Panc1 (cell line): ENCODE measurements at regions of chr1 and their contacts with region 1.

Region 1: DNA sequence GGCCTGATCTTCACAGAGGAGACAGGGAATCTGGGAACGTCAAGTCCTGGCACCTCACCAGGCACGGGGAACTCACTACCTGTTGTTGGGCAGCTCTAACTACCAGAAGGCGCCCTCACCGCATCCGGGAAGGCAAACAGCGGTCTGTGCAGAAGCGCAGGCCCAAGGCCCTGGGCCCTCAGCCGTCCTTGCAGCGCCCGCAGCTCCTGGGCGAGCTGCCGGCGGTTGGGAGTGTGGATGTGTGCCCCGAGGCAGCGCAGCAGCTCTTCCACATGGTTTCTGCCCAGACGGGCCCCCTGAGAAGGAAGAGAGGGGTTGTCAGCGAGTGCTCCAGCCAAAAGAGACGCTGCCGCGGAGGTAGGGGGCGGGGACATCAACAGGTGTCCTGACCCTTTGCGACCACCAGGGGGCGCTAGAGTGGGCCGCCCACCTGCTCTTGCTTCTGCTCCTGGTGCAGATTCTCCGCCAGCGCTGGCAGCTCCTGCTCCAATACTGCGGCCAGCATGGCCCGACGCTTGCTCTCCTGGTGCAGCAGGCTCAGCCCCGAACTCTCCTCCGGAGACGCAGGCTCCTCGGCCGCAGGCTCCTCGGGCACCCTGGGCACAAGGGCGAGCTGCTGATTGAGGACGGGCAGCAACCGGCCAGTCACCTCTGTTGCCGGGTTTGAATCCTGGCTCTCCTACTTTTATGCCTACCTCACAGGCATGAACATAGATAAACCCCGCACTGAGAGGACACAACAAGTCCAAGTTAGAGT is 9.3 kb downstream of the MAP3K6 start:
- DNase-seq: no peak
- ATAC-seq: peak; percentile 83
- H3K4me3 ChIP-seq: no peak overlapping the region
- H3K27ac ChIP-seq: no peak overlapping the region
- H3K4me1 ChIP-seq: no peaks in the 10 kb centered on the region
- H3K27me3 ChIP-seq: no peaks in the 10 kb centered on the region
- CTCF ChIP-seq: peak; percentile 97

Region 2: DNA sequence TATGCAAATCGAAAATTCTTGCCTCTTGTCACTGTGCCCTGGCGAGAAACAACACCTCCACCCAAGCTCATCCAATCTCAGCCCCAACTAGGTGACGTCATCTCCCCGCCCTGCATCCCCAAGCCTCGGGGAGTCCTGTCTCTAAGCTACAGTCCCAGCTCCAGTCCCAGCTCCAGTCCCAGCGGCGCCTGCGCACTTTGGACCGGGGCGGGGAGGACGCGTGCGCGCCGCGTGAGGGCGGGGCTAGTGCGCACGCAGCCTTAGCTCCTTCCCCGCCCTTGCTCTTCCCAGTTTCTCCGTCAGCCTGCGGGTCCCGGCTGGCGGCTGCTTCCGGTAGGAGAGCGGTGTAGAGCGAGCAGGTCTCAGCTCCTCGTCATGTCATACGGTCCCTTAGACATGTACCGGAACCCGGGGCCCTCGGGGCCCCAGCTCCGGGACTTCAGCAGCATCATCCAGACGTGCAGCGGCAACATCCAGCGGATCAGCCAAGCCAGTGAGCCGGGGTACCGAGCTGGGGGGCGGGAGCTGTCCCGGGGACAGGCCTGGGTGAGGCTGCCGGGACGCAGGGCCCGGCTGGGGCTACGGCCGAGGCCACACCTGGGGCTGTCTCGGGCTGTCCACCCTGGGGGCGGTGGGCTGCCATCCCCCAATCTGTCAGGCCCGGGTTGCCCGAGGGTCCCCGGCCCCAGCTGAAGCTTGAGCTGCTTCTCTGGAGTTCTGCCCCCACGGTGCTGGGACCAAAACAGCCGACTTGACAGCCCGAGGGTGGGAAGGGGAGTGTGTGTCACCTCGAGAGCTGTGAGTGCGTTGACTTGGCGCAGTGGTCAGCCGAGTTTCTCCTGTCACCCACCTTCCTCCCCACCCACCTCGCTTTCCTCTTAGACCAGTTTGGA is 415.7 kb after region 1 on chr1 and contains the start of gene STX12:
- CTCF ChIA-PET with region 1: interaction called, 12 read pairs
- POLR2A ChIA-PET with region 1: no interaction called
- in situ Hi-C with region 1: no loop called
- intact Hi-C with region 1: no loop called
- DNase-seq: peak; percentile 98
- ATAC-seq: peak; percentile 99
- H3K4me3 ChIP-seq: peak within 1 kb of the TSS; percentile 84 to 88
- H3K27ac ChIP-seq: peak within 1 kb of the TSS; percentile 83
- H3K4me1 ChIP-seq: peaks cover 6% of the 10 kb centered on the region; the same call in 1 of the 2 replicates
- H3K27me3 ChIP-seq: no peaks in the 10 kb centered on the region
- CTCF ChIP-seq: no peak
- total RNA-seq, gene STX12: 25.3 TPM